ENCODE measurements at regions of chr11 and their contacts with region 1.

Region 1: GRCh38 chr11:103947546-103947919 is 88.9 kb upstream of the DDI1 start:
- DNase-seq: no peak

Region 2: DNA sequence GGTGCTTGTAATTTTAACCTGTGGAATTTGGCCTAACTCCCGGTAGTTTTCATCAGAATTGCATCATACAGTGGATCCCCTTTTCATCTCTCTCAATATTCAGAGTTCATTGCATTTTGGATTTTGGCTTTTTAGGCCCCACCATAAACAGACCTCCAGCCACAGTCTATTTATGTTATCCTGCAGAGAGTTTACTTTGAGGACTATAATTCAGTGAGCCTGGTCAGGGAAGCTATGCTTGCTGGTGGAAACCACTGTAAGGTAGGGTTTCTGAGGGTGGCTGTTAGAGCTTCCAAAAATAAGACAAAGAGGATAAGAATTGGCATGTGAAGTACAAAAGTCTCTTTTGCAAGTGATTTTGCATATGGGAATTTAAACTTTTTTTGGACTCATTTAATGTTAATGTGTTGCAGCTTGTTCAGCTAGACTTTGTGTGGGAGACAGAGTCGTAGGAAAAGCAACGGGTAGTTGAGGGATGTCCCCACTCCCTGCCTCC is 54.1 kb after region 1 on chr11:
- intact Hi-C with region 1: loop called (anchors 10 kb)
- DNase-seq: no peak